Mucosa of descending colon (tissue), 3 donors: ENCODE measurements at regions of chr5 and their contacts with region 1.

Region 1: DNA sequence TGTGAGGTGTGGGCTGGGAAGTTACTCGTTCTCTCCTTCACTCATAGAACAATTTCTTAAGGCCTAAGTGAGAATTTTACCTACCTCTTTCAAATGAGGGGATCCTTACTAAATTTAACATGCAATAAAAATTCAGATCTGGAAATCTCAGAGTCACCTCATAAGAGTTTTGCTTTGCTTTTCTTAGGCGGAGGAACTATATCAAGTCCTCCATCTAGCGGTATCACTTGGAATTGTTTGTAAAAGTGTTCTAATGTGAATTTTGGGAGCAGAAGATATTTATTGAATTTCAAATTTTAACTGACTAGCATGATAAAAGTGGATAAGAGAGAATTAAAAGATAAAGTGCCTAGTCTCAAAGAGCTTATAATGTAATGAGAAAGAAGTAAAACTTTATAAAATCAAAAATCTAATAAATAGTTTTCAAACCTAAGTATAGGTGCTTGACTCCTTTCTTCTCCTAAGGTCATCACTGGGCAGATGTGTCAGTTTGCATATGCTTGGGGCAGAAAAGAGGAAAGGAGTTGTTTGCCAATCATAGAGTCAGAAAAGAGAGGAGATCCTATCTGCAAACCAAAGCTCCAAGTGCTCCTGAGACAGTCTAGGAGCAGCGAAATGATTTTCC is 145.7 kb upstream of the DAB2 start:
- DNase-seq: no peak
- ATAC-seq: peak; percentile 66
- H3K4me3 ChIP-seq: no peak overlapping the region
- H3K4me1 ChIP-seq: no peaks in the 10 kb centered on the region
- CTCF ChIP-seq: peak; percentile 18

Region 2: DNA sequence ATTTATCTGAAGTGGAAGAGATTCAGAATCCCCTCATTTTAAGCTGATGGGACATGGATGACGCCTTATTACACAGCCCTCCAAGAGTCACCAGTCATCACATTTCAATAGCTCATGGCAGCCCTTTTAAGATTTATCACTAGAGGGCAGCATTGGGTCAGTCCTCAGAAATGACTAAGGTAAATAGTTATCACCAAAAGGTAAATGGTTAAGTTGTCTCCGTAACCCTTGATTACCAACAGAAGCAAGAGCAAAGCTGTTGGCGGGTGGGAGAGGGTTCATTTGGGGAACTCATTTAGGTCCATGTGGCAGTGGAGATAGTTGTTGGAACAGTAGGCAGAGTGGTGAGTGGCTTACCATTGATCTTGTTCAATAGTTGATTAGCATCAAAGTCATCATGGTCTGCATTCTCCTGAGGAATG is 194.2 kb before region 1 on chr5:
- intact Hi-C with region 1: loop called in 1 of 2 experiments (anchors 10 kb)
- DNase-seq: peak in 1 of 3 donors; percentile 80
- ATAC-seq: peak; percentile 69
- H3K4me3 ChIP-seq: no peak overlapping the region
- H3K4me1 ChIP-seq: peaks cover 5% of the 10 kb centered on the region
- CTCF ChIP-seq: peak; percentile 41

Region 3: DNA sequence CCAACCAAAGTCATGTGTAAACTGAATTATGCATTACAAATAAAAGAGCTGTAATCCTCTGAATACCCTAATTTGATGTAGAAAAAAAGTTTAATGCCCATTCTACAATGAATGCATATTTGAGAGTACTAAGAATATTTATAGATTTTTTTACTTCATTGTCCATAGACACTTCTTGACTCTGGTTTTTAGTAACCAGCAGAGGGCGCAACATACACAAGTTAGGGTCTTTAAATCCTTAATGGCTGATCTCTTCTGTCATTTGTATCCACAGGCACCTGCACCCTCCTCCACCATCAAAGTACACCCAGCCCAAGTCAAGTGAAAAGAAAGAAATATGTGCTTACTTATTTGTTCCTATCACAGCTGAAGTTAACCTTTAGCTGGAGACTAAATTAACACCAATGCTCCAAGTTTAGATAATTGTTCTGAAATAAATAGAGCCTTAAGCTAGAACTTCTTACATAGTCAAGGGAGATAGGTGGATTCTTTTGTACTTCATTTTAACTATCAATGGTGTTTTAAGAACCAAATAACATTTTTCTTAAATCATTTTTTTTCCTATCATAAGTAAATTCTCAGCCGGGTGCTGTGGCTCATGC is 378.5 kb after region 1 on chr5:
- intact Hi-C with region 1: loop called in 1 of 2 experiments (anchors 10 kb)
- DNase-seq: peak in 1 of 3 donors; percentile 90
- ATAC-seq: peak; percentile 84
- H3K4me3 ChIP-seq: no peak overlapping the region
- H3K4me1 ChIP-seq: no peaks in the 10 kb centered on the region
- CTCF ChIP-seq: no peak